A673 (cell line): ENCODE measurements at regions of chr7 and their contacts with region 1.

Region 1: GRCh38 chr7:156397249-156397648 is 243.3 kb upstream of the RNF32 start:
- DNase-seq: no peak
- H3K4me3 ChIP-seq: no peak overlapping the region
- H3K27ac ChIP-seq: no peak overlapping the region
- H3K4me1 ChIP-seq: no peaks in the 10 kb centered on the region
- H3K27me3 ChIP-seq: peaks cover 51% of the 10 kb centered on the region
- CTCF ChIP-seq: no peak

Region 2: GRCh38 chr7:156344595-156344994 is 52.7 kb before region 1 on chr7:
- CTCF ChIA-PET with region 1: no interaction called
- POLR2A ChIA-PET with region 1: interaction called, 13 read pairs
- intact Hi-C with region 1: no loop called
- DNase-seq: no peak
- H3K4me3 ChIP-seq: no peak overlapping the region
- H3K27ac ChIP-seq: no peak overlapping the region
- H3K4me1 ChIP-seq: no peaks in the 10 kb centered on the region
- H3K27me3 ChIP-seq: peaks cover 22% of the 10 kb centered on the region
- CTCF ChIP-seq: no peak

Region 3: GRCh38 chr7:156423876-156424275 is 26.6 kb after region 1 on chr7:
- CTCF ChIA-PET with region 1: no interaction called
- POLR2A ChIA-PET with region 1: no interaction called
- intact Hi-C with region 1: no loop called
- DNase-seq: no peak
- H3K4me3 ChIP-seq: no peak overlapping the region
- H3K27ac ChIP-seq: no peak overlapping the region
- H3K4me1 ChIP-seq: no peaks in the 10 kb centered on the region
- H3K27me3 ChIP-seq: peaks cover 27% of the 10 kb centered on the region
- CTCF ChIP-seq: no peak

Region 4: DNA sequence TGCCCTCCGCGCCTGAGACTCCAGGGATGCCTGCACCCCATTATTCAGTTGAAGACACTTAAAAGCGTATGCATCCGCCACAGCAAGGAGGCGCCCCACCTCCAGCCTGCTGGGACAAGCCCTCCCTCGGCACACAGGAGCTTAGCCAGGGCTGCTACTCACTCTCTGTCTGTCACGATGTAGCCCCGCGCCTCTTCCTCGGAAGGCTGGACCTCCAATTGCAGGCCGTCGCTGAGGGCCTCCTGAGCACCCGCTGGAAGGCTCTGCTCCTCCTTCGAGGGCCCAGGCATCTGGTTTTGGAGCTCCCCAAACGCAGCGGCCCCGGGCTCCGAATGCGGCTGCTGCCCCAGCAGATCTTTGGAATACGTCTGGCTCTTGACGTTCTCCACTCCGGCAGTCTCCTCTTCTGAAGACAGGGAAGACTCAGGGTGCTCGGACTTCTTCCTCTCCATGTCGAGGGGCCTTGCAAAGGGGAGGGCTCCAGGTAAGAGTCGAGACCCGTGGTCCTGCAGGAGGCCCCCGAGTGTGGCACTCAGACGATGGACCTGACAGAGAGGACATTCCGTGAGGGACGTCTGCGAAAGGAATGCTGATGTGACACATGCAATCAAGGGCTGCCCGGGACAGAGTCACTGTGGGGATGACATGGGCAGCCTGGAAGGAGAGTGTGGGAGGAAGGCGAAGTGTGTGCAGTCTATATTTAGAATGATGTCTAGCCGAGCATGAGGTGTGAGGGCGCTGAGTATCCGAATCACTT is 1736.4 kb after region 1 on chr7:
- CTCF ChIA-PET with region 1: no interaction called
- POLR2A ChIA-PET with region 1: no interaction called
- intact Hi-C with region 1: no loop called
- DNase-seq: no peak
- H3K4me3 ChIP-seq: no peak overlapping the region
- H3K27ac ChIP-seq: no peak overlapping the region
- H3K4me1 ChIP-seq: no peaks in the 10 kb centered on the region
- H3K27me3 ChIP-seq: no peaks in the 10 kb centered on the region
- CTCF ChIP-seq: no peak